Aorta (tissue), 5 donors: ENCODE measurements at regions of chr12 and their contacts with region 1.

Region 1: DNA sequence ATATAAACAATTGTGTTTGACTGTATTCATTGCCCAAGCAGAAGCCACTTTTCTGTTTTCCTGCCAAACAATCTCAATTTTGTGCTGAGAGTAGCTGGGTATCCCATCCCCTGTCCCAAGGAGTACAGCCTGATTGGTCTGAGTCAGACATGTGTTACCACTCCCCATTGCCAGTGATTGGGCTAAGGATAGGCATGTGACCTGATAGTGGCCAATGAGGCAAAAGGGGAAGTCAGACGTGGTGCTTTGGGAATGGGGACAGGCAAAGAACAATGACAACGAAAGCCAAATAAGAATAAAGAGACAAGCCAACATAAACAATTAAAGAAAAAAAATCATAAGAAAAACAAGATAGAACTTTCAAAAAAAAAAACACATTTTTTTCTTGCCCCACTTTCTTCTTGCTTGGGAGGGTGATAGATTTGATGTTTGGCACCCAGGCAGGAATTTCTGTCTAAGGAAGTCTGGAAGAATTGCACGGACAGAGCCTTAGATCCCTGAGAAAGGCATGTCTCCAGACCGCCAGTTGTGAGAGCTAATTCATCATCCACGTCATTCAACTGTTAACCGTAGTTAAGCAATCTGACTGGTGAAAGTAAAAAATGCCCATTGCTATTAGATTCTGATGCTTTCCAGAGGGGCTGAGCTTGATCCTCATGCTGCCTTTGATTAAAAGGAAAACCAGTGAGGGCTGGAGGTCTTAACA is 626.6 kb upstream of the TMEM132C start:
- DNase-seq: peak in 1 of 2 donors; percentile 70
- ATAC-seq: peak; percentile 89
- H3K4me3 ChIP-seq: no peak overlapping the region
- H3K27ac ChIP-seq: peak overlapping the region; percentile 47 to 88
- H3K4me1 ChIP-seq: no peaks in the 10 kb centered on the region
- H3K27me3 ChIP-seq: no peaks in the 10 kb centered on the region

Region 2: DNA sequence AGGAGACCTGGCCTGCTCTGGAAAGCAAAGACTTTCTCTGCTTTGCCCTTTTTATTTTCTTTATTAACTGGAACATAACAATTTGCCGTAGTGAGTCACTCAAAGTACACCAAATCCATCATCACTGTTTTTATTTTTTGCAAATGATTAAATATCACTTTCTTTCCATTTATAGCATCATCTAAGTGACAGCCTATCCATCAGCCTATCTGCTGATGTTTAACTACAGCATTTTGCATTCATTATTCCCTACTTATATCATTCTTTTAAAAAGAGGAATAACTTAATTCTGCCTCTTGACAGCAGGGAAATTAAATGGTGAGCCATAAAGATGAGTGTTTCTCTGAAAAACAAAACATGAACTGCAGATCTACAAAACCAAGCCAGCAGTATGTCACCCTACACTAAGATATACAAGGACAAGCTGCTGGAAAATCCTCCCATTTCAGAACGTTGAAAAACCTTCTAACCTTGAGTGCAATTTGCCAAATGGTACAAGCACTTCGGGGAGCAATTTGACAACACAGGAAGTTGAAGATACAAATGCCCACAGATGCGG is 194.7 kb before region 1 on chr12:
- intact Hi-C with region 1: loop called in 1 of 2 experiments (anchors 5 kb)
- DNase-seq: no peak
- ATAC-seq: no peak
- H3K4me3 ChIP-seq: no peak overlapping the region
- H3K27ac ChIP-seq: peak overlapping the region in 1 of 2 donors; percentile 62
- H3K4me1 ChIP-seq: peaks cover 0 to 2% of the 10 kb centered on the region in 2 donors
- H3K27me3 ChIP-seq: no peaks in the 10 kb centered on the region

Region 3: GRCh38 chr12:127485528-127485927 is 154.8 kb before region 1 on chr12:
- intact Hi-C with region 1: no loop called
- DNase-seq: peak in 1 of 2 donors; percentile 59
- ATAC-seq: no peak
- H3K4me3 ChIP-seq: no peak overlapping the region
- H3K27ac ChIP-seq: no peak overlapping the region
- H3K4me1 ChIP-seq: no peaks in the 10 kb centered on the region
- H3K27me3 ChIP-seq: no peaks in the 10 kb centered on the region

Region 4: DNA sequence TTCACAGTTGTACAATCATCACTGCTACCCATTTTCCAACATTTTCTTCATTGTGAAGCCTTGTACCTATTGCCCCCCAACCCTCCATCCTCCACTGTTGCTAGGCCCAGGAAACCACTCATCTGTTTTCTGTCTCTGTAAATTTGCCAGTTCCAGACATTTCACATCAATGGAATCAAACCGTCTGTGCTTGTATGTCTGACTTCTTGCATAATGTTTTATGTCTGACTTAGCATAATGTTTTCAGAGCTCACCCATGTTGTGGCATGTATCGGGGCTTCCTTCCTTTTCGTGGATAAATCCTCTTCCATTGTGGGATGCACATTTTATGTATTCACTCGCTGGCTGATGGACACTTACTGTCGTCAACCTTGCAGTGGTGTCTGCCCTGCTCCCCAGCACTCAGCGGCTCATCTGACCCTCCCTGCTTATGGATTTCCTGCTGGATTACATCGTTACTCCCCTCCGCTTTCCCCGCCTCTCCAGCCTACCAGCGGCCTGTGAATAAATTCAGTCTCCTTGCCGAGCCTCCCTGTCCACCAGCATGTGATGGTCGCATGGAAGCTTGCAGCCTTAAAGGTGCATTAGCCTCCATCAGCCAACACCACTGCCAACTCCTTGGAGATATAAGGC is 101.0 kb before region 1 on chr12:
- intact Hi-C with region 1: no loop called
- DNase-seq: no peak
- ATAC-seq: no peak
- H3K4me3 ChIP-seq: no peak overlapping the region
- H3K27ac ChIP-seq: no peak overlapping the region
- H3K4me1 ChIP-seq: no peaks in the 10 kb centered on the region
- H3K27me3 ChIP-seq: no peaks in the 10 kb centered on the region